Activated T-helper 2 cell treated with anti-CD3 and anti-CD28 coated beads, Interferon-gamma antibody, Interleukin-2, Interleukin-4, amounts not matched to agents 10 μg/mL and 5 μg/mL and 100 μg/mL, durations not matched to agents 14 hours and 24 hours and 36 hours (primary cell): ENCODE measurements at regions of chr12 and their contacts with region 1.

Region 1: GRCh38 chr12:68932961-68933893 is at the start of gene CPM:
- DNase-seq: peak; percentile 80
- H3K4me3 Mint-ChIP-seq: peak within 1 kb of the TSS; percentile 96
- H3K27ac Mint-ChIP-seq: peak within 1 kb of the TSS; percentile 84
- H3K4me1 Mint-ChIP-seq: peaks cover 29% of the 10 kb centered on the region
- H3K27me3 Mint-ChIP-seq: no peaks in the 10 kb centered on the region
- total RNA-seq, gene CPM: 48.1 and 49.7 TPM in 2 replicates

Region 2: GRCh38 chr12:68871921-68872320 is 61.3 kb before region 1 on chr12:
- intact Hi-C with region 1: loop called (anchors 5 kb)
- DNase-seq: no peak
- H3K4me3 Mint-ChIP-seq: no peak overlapping the region
- H3K27ac Mint-ChIP-seq: no peak overlapping the region
- H3K4me1 Mint-ChIP-seq: peaks cover 13% of the 10 kb centered on the region
- H3K27me3 Mint-ChIP-seq: no peaks in the 10 kb centered on the region

Region 3: DNA sequence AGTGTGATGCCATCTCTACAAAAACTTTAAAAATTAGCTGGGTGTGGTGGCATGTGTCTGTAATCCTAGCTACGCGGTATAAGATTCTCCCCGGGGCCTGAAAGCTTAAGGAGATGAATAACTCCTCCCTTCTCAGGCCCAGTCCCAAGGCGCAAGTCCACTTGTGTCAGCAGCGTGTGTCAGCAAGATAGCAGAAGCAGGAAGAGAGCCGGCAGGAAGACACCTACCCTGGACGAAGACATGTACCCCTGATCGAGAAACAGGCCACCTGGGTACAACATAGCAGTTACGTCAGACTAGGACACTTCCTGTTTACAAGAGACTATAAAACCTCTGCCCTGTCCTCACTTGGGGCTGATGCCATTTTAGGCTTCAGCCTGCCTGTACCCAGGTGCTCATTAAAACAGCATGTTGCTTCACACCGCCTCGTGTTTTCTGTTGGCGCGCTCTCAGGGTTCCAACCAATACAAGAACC is 43.5 kb before region 1 on chr12:
- intact Hi-C with region 1: loop called (anchors 2 kb)
- DNase-seq: no peak
- H3K4me3 Mint-ChIP-seq: no peak overlapping the region
- H3K27ac Mint-ChIP-seq: peak overlapping the region; percentile 13
- H3K4me1 Mint-ChIP-seq: peaks cover 53% of the 10 kb centered on the region
- H3K27me3 Mint-ChIP-seq: no peaks in the 10 kb centered on the region

Region 4: DNA sequence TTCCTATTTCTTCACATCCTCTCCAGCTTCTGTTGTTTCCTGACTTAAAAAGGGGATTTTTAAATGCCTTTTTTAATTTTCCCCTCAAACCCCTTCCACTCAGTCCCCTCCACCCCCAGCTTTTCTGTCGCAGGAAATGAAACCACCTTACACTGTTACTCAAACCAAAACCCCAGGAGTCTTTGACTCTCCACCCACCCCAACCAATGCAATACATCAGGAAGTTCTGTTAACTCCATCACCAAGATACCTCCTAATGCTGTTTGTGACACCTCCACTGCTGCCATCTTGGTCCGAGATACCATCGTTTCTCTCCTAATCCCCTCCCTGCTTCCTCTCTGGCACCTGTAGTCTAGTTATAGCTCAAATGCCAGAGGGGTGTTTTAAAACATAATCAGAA is 25.1 kb after region 1 on chr12:
- intact Hi-C with region 1: loop called (anchors 2 kb)
- DNase-seq: peak; percentile 38
- H3K4me3 Mint-ChIP-seq: peak overlapping the region; percentile 3
- H3K27ac Mint-ChIP-seq: peak overlapping the region; percentile 89
- H3K4me1 Mint-ChIP-seq: peaks cover 45% of the 10 kb centered on the region
- H3K27me3 Mint-ChIP-seq: no peaks in the 10 kb centered on the region

Region 5: DNA sequence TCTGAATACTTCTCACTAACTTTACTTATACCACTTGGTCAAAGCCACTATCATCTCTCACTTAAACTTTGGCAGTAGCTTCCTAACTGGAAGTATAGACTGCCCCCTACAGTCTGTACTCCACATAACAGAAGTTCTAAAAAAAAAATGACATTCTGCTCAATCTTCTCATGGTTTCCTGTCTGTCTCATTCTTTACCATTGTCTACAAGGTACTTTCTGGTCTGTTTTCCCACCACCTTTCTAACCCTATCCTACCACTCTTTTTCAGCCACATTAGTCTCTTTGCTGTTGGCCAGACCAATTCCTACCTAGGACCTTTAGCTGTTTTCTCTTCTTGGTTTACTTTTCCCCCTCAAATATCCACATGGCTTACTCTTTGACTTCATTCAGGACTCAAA is 320.8 kb after region 1 on chr12:
- intact Hi-C with region 1: loop called (anchors 10 kb)
- DNase-seq: no peak
- H3K4me3 Mint-ChIP-seq: no peak overlapping the region
- H3K27ac Mint-ChIP-seq: peak overlapping the region; percentile 54
- H3K4me1 Mint-ChIP-seq: peaks cover 36% of the 10 kb centered on the region
- H3K27me3 Mint-ChIP-seq: no peaks in the 10 kb centered on the region